A549 (cell line): ENCODE measurements at regions of chr17 and their contacts with region 1.

Region 1: GRCh38 chr17:58631523-58632323 is 60.1 kb downstream of the TEX14 start:
- DNase-seq: peak; percentile 85 to 98
- ATAC-seq: peak; percentile 98 to 99
- H3K4me3 ChIP-seq: peak overlapping the region; percentile 40
- H3K27ac ChIP-seq: peak overlapping the region; percentile 83 to 89
- H3K4me1 ChIP-seq: peaks cover 9% of the 10 kb centered on the region
- CTCF ChIP-seq: peak; percentile 40; the same call in 2 of the 3 replicates
- EP300 ChIP-seq: no peak
- POLR2A ChIP-seq: peak; percentile 100
- RAD21 ChIP-seq: peak; percentile 40 to 50; a peak in 4 of 5 replicates

Region 2: GRCh38 chr17:58577642-58578091 is 54.1 kb before region 1 on chr17:
- CTCF ChIA-PET with region 1: interaction called, 10 read pairs
- POLR2A ChIA-PET with region 1: interaction called, 14 read pairs
- DNase-seq: peak; percentile 53 to 70
- ATAC-seq: peak; percentile 68 to 86
- H3K4me3 ChIP-seq: no peak overlapping the region
- H3K27ac ChIP-seq: no peak overlapping the region
- H3K4me1 ChIP-seq: peaks cover 14% of the 10 kb centered on the region; the same call in 2 of the 3 replicates
- CTCF ChIP-seq: peak; percentile 69
- EP300 ChIP-seq: no peak
- POLR2A ChIP-seq: no peak
- RAD21 ChIP-seq: peak; percentile 47 to 48; a peak in 4 of 5 replicates

Region 3: GRCh38 chr17:58615768-58616659 is 15.7 kb before region 1 on chr17:
- CTCF ChIA-PET with region 1: interaction called, 5 read pairs
- POLR2A ChIA-PET with region 1: interaction called, 29 read pairs
- DNase-seq: no peak
- ATAC-seq: no peak
- H3K4me3 ChIP-seq: no peak overlapping the region
- H3K27ac ChIP-seq: no peak overlapping the region
- H3K4me1 ChIP-seq: no peaks in the 10 kb centered on the region
- CTCF ChIP-seq: no peak
- EP300 ChIP-seq: no peak
- POLR2A ChIP-seq: no peak
- RAD21 ChIP-seq: no peak

Region 4: DNA sequence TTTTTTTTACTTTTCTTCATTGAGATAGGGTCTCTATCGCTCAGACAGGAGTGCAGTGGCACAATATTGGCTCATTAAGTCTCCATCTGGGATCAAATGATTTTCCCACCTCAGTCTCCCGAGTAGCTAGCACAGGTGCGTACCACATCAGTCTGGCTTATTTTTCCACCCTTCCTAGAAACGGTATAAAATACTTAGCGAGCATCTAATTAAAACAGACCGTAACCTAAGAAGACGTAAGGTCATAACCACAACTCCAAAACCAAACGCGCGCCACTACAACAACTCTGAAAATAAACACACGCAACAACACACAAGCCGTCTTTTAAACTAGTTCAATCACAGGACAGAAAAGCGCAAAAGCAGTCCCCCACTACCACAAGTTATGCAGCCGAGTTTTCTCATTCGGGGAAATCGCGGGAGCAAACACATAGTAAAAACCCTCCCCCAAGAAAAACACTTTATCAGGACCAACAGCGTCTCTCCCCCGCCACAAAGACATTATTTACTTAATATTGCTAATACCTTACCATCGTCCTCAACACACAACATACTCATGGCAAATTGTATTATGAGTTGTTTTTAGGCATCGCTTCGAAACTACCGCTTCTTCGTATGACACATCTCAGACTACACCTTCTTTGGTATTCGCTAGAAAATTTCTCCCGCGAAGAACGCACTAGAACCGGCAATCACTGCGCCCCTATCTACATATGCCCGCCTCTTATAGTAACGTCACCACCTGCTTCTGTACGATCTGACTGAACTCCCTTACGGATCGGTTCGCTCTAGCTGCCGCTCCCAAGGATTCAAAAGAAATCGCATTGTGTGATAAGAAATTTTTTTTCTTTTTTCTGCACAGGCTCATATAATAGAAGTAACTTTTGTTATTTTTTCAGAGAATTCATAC is 27.3 kb after region 1 on chr17:
- CTCF ChIA-PET with region 1: interaction called, 3 read pairs
- POLR2A ChIA-PET with region 1: interaction called, 160 read pairs
- DNase-seq: peak; percentile 92 to 95
- ATAC-seq: peak; percentile 92 to 95
- H3K4me3 ChIP-seq: peak overlapping the region; percentile 56
- H3K27ac ChIP-seq: peak overlapping the region; percentile 88 to 89
- H3K4me1 ChIP-seq: peaks cover 3% of the 10 kb centered on the region; the same call in 1 of the 3 replicates
- CTCF ChIP-seq: no peak; the same call in 2 of the 3 replicates
- EP300 ChIP-seq: peak in 1 of 2 experiments; percentile 46; a peak in 1 of 5 replicates
- POLR2A ChIP-seq: peak; percentile 100
- RAD21 ChIP-seq: peak; percentile 10 to 45; a peak in 3 of 5 replicates

Region 5: GRCh38 chr17:58692239-58693055 is 60.7 kb after region 1 on chr17 and contains the start of gene RAD51C:
- CTCF ChIA-PET with region 1: no interaction called
- POLR2A ChIA-PET with region 1: interaction called, 25 read pairs
- DNase-seq: peak; percentile 90 to 93
- ATAC-seq: peak; percentile 99
- H3K4me3 ChIP-seq: peak within 1 kb of the TSS; percentile 53
- H3K27ac ChIP-seq: peak within 1 kb of the TSS; percentile 65 to 85
- H3K4me1 ChIP-seq: peaks cover 19% of the 10 kb centered on the region
- CTCF ChIP-seq: no peak
- EP300 ChIP-seq: no peak
- POLR2A ChIP-seq: peak; percentile 82
- RAD21 ChIP-seq: no peak
- polyA plus RNA-seq, gene RAD51C: 96.7 and 121 TPM in 2 replicates